ENCODE measurements at regions of chr10 and their contacts with region 1.

Region 1: DNA sequence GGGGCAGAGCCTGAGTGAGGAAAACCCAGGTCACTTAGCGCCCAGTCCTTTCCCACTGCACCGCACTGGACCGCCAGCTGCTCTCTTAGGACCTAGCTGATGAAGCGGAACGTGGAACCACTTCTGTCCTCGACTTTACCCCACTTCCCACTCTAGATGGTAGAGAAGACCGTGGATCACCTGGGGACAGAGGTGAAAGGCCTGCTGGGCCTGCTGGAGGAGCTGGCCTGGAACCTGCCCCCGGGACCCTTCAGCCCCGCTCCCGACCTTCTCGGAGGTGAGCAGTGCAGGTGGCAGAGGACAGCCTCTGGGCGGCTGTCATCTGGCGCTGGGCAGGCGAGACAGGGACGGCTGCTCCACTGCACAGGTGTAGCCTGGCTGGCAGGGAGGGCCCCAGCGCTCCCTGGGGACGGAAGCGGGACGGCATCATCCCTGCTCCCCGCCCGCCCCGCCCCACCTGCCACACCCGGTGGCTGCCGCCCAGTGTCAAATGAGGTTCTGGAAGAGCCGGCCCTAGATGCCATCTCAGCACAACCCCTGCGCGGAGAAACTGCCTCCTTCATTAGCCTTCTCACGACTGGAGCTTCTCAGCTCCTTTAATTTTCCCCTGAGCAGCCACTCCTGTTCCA is 11.7 kb downstream of the PLAC9 start:
- DNase-seq: peak in 14 of 35 experiments; percentile 5 to 47 (median 16)
- ATAC-seq: peak; percentile 54 to 61 (median 58)
- H3K4me3 ChIP-seq: peak overlapping the region; percentile 26 to 48
- H3K4me3 Mint-ChIP-seq: peak overlapping the region; percentile 68 to 85 (median 74)
- H3K27ac ChIP-seq: peak overlapping the region; percentile 34
- H3K27ac Mint-ChIP-seq: peak overlapping the region; percentile 83 to 86
- H3K4me1 ChIP-seq: peaks cover 5 to 14% of the 10 kb centered on the region in 2 experiments
- H3K4me1 Mint-ChIP-seq: peaks cover 21 to 25% (median 21%) of the 10 kb centered on the region in 3 donors
- H3K27me3 ChIP-seq: peaks cover 0 to 15% of the 10 kb centered on the region in 2 experiments
- H3K27me3 Mint-ChIP-seq: peaks cover 0 to 11% of the 10 kb centered on the region in 2 donors

Region 2: DNA sequence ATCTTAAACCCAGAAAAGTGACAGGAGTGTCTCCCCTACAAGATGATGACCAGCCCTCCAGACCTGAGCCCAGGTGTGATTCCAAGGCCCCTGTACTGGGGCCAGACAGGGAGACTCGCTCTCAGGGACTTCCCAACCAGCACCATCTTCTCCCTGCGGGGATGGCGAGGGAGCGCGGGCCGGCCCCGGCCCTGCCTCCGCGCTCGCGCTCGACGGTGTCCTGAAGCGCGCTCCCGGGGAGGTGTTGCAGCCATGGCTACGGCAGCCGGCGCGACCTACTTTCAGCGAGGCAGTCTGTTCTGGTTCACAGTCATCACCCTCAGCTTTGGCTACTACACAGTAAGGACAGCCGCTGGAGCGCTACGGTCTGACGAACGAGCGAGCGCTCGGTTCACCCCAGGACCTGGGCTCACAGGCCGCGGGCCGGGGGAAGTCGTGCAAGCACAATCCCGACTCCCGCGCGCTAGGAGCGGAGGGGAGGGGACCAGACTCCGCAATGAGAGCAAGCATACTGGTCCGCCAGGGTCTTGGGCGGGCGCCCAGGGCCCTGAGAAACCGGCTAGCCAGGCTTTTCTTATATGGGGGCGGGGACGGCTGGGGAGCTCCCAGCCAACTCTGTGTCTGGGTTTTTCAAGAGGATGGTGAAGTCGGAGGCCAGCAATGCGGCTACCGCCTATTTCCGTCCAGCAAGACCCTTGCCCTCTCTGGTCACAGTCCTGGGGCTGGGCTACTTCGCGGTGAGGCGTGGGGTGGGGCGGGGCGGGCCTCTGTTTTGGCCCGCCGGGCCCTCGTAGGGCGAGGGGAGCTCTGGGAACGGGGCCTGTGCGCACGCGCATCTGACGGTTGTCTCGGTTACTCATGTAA is 65.5 kb before region 1 on chr10 and contains the start of gene TMEM254:
- CTCF ChIA-PET with region 1: no interaction called
- POLR2A ChIA-PET with region 1: no interaction called
- DNase-seq: peak; percentile 65 to 90 (median 84)
- ATAC-seq: peak; percentile 82 to 89 (median 86)
- H3K4me3 ChIP-seq: peak within 1 kb of the TSS; percentile 72 to 90
- H3K4me3 Mint-ChIP-seq: peak within 1 kb of the TSS; percentile 91 to 96 (median 96)
- H3K27ac ChIP-seq: peak within 1 kb of the TSS; percentile 81
- H3K27ac Mint-ChIP-seq: peak within 1 kb of the TSS; percentile 92 to 94
- H3K4me1 ChIP-seq: peaks cover 5 to 13% of the 10 kb centered on the region in 2 experiments
- H3K4me1 Mint-ChIP-seq: peaks cover 16 to 25% (median 20%) of the 10 kb centered on the region in 3 donors
- H3K27me3 ChIP-seq: no peaks in the 10 kb centered on the region
- H3K27me3 Mint-ChIP-seq: no peaks in the 10 kb centered on the region
- total RNA-seq, gene TMEM254: 9.6 to 16.6 (median 13.3) TPM

Region 3: GRCh38 chr10:80187465-80188409 is 43.6 kb after region 1 on chr10:
- CTCF ChIA-PET with region 1: interaction called in 1 of 2 experiments, 13 read pairs
- POLR2A ChIA-PET with region 1: no interaction called
- DNase-seq: peak; percentile 73 to 96 (median 87)
- ATAC-seq: peak; percentile 94 to 96 (median 96)
- H3K4me3 ChIP-seq: peak overlapping the region; percentile 19 to 33
- H3K4me3 Mint-ChIP-seq: peak overlapping the region; percentile 67 to 75 (median 68)
- H3K27ac ChIP-seq: peak overlapping the region; percentile 86
- H3K27ac Mint-ChIP-seq: peak overlapping the region; percentile 94 to 95
- H3K4me1 ChIP-seq: peaks cover 42 to 85% of the 10 kb centered on the region in 2 experiments
- H3K4me1 Mint-ChIP-seq: peaks cover 87 to 92% (median 88%) of the 10 kb centered on the region in 3 donors
- H3K27me3 ChIP-seq: no peaks in the 10 kb centered on the region
- H3K27me3 Mint-ChIP-seq: no peaks in the 10 kb centered on the region

Region 4: DNA sequence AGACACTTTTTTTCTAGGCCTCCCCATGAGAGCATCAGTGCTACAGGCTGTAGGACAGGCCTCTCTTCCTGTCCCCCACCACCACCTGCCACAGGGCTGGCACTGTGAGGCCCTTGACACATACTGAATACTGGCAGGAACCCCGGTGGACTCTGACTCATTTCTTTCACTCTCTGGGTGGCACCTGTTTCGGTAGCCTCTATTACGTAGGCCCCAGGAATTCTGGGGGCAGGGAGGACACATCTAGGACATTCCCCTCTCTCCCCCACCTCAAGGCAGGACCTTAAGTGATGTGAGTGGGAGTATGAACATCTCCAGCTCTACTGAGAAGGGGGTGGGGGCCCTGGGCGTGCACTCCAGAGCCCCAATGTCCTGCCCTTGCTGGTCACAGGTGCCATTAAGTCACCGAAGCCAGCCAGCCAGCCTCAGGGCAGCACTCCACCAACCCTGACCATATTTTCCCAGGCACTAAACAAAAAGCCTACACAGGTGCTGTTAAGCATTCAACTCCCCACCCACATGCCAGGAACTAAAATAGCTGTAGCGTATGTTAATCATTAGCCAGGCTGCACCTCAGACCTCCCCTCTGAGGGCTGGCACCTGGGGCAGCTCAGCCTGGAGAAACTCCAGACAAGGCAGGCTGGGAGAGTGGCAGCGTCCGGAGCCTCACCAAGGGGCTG is 52.2 kb after region 1 on chr10:
- CTCF ChIA-PET with region 1: interaction called in 1 of 2 experiments, 10 read pairs
- POLR2A ChIA-PET with region 1: no interaction called
- DNase-seq: peak in 34 of 35 experiments; percentile 36 to 71 (median 57)
- ATAC-seq: peak; percentile 89 to 97 (median 94)
- H3K4me3 ChIP-seq: peak overlapping the region; percentile 9 to 29
- H3K4me3 Mint-ChIP-seq: peak overlapping the region; percentile 42 to 75 (median 57)
- H3K27ac ChIP-seq: peak overlapping the region; percentile 91
- H3K27ac Mint-ChIP-seq: peak overlapping the region; percentile 93 to 96
- H3K4me1 ChIP-seq: peaks cover 36 to 81% of the 10 kb centered on the region in 2 experiments
- H3K4me1 Mint-ChIP-seq: peaks cover 83 to 90% (median 86%) of the 10 kb centered on the region in 3 donors
- H3K27me3 ChIP-seq: no peaks in the 10 kb centered on the region
- H3K27me3 Mint-ChIP-seq: no peaks in the 10 kb centered on the region

Region 5: GRCh38 chr10:80202934-80203834 is 59.0 kb after region 1 on chr10:
- CTCF ChIA-PET with region 1: interaction called, 3 to 10 read pairs
- POLR2A ChIA-PET with region 1: no interaction called
- DNase-seq: peak; percentile 23 to 78 (median 56)
- ATAC-seq: peak; percentile 54 to 62 (median 59)
- H3K4me3 ChIP-seq: peak overlapping the region; percentile 72 to 94
- H3K4me3 Mint-ChIP-seq: peak overlapping the region; percentile 83 to 98 (median 97)
- H3K27ac ChIP-seq: peak overlapping the region; percentile 26
- H3K27ac Mint-ChIP-seq: peak overlapping the region; percentile 87 to 92
- H3K4me1 ChIP-seq: peaks cover 41 to 69% of the 10 kb centered on the region in 2 experiments
- H3K4me1 Mint-ChIP-seq: peaks cover 65 to 70% (median 70%) of the 10 kb centered on the region in 3 donors
- H3K27me3 ChIP-seq: no peaks in the 10 kb centered on the region
- H3K27me3 Mint-ChIP-seq: no peaks in the 10 kb centered on the region